ENCODE measurements at regions of chr9 and their contacts with region 1.

Region 1: GRCh38 chr9:135864447-135865049 is 42.8 kb downstream of the CAMSAP1 start:
- DNase-seq: peak; percentile 64 to 89 (median 81)
- ATAC-seq: peak; percentile 22 to 43
- H3K4me3 ChIP-seq: no peak overlapping the region
- H3K27ac ChIP-seq: no peak overlapping the region
- H3K4me1 ChIP-seq: no peaks in the 10 kb centered on the region
- H3K27me3 ChIP-seq: no peaks in the 10 kb centered on the region

Region 2: DNA sequence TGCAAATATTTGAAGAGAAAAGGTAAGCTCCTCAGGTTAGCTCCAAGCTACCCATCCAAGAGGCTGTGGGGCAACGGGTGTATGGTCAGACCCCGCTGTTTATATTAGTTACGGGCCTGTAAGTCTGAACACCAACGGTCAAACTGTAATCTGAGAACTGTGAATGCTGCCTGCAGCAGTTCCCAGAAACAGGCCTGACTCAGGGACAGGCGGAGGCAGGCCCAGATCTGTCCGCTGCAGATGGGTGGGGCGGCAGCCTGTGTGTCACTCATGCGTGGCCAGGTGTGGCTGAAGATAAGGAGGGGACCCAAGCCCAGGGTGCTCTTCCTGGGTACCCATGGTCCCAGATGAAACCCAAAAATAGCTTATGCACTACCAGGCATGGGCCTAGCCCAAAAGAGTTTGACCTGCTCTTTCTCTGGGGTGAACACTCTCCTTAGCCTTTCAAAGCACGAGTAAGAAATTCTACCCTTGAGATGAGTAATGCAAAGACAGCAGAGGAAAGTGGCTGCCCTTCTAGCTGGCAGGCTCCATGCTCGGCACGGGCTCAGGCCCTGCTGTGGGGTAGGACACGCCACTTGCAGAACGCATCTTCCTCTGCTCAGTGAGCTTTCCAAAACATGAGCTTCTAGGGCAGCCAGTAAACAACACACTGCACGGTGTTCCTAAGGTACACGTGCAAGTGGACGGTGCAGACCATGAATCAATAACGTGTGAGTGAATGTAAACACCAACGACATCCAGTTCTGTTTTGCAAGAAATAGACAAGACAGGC is 87.5 kb after region 1 on chr9:
- intact Hi-C with region 1: loop called in 2 of 4 experiments (anchors 10 kb)
- DNase-seq: no peak
- ATAC-seq: no peak
- H3K4me3 ChIP-seq: no peak overlapping the region
- H3K27ac ChIP-seq: no peak overlapping the region
- H3K4me1 ChIP-seq: no peaks in the 10 kb centered on the region
- H3K27me3 ChIP-seq: no peaks in the 10 kb centered on the region

Region 3: DNA sequence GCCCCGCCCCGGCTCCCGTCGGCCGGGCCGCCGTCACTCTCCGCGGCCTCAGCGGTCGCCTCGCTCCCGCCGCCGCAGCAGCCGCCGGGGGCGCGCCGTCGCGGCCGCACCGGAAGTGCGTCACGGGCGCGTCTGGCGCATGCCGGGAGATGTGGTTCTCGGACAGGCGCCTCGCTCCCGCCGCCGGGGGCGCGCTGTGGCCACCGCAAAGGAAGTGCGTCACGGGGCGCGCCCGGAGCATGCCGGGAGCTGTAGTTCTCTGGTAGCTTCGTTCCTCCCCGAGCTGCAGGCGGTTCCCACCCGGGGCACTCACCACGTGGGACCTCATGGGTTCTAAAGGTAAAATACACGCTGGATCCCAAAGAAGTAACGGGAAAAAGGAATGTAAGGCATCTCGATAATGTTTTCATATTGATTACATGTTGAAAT is 96.7 kb after region 1 on chr9 and contains the start of gene UBAC1:
- intact Hi-C with region 1: loop called in 3 of 4 experiments (anchors 10 kb)
- DNase-seq: peak; percentile 97 to 99 (median 99)
- ATAC-seq: peak; percentile 93 to 94
- H3K4me3 ChIP-seq: peak within 1 kb of the TSS; percentile 96
- H3K27ac ChIP-seq: peak within 1 kb of the TSS; percentile 98
- H3K4me1 ChIP-seq: no peaks in the 10 kb centered on the region
- H3K27me3 ChIP-seq: no peaks in the 10 kb centered on the region
- total RNA-seq, gene UBAC1: 64.0 to 88.7 (median 76.2) TPM

Region 4: GRCh38 chr9:136129176-136129575 is 264.6 kb after region 1 on chr9:
- intact Hi-C with region 1: loop called in 3 of 4 experiments (anchors 5 to 10 kb)
- DNase-seq: peak in 1 of 3 donors; percentile 31
- ATAC-seq: no peak
- H3K4me3 ChIP-seq: no peak overlapping the region
- H3K27ac ChIP-seq: no peak overlapping the region
- H3K4me1 ChIP-seq: peaks cover 2% of the 10 kb centered on the region
- H3K27me3 ChIP-seq: no peaks in the 10 kb centered on the region

Measured in right cardiac atrium (tissue), 5 donors.